AG04450 (cell line): ENCODE measurements at regions of chr20 and their contacts with region 1.

Region 1: DNA sequence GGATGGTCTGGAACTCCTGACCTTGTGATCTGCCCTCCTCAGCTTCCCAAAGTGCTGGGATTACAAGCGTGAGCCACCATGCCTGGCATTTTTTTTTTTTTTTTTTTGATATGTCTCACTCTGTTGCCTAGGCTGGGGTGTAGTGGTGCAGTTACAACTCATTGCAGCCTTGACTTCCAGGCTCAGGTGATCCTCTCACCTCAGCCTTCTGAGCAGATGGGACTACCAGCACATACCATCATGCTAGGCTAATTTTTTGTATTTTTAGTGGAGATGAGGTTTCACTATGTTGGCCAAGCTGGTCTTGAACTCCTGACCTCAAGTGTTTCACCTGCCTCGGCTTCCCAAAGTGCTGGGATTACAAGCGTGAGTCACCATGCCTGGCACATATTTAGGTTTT is 34.3 kb downstream of the PHF20 start:
- DNase-seq: no peak
- H3K4me3 ChIP-seq: no peak overlapping the region
- H3K27ac ChIP-seq: no peak overlapping the region
- H3K27me3 ChIP-seq: no peaks in the 10 kb centered on the region
- CTCF ChIP-seq: no peak

Region 2: DNA sequence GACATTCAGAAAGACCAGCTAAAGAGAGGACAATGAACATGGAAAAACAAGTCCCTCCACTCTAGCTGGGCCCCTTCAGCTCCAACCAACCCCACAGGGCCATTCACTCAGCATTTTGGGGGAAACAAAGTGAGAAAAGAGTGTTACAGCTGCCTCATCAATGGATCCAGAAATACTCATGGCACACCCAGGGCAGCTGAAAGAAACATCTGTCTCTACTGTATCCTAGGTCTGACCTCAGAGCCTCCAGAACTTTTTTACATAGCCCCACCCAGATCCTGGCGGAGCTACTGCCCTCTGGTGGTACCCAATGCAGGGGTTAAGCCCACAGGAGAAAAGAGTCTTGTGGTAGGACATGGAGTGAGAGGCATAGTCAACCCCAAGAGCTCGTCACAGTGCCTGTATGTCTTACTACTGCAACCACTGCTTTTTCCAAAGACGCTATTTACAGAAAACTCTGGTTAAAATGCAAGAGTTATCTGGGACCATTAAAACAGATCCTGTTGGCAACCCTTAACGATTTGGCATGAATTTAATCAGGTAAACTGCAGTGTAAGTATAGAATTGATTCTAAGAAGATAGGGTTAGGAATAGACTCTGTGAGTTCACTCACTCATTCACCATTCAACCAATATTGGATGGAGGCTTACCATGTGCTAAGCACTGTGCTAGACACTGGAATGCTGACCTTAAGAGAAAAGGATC is 476.5 kb before region 1 on chr20:
- CTCF ChIA-PET with region 1: no interaction called
- POLR2A ChIA-PET with region 1: no interaction called
- DNase-seq: no peak
- H3K4me3 ChIP-seq: no peak overlapping the region
- H3K27ac ChIP-seq: no peak overlapping the region
- H3K27me3 ChIP-seq: no peaks in the 10 kb centered on the region
- CTCF ChIP-seq: peak; percentile 51

Region 3: GRCh38 chr20:35776513-35777101 is 29.5 kb before region 1 on chr20:
- CTCF ChIA-PET with region 1: no interaction called
- POLR2A ChIA-PET with region 1: no interaction called
- DNase-seq: no peak
- H3K4me3 ChIP-seq: no peak overlapping the region
- H3K27ac ChIP-seq: no peak overlapping the region
- H3K27me3 ChIP-seq: no peaks in the 10 kb centered on the region
- CTCF ChIP-seq: no peak

Region 4: DNA sequence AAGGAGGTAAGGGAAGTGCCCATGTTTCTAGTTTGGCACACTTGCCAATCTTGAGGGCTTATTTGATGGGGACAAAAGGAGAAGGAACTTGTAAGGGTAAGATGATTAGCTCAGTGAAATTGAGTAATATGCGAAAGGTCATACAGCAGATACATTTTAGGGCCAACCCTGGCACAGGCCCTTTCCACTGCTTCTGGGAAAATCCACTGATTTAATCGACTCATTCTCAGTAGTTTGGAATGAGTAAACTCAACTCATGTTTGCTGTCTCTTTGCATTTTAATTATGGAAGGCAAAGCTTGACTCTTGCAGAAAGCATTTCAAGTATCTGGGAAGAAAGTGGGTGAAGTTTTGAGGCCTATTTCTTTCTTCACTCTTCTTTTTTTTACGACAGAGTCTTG is 14.3 kb before region 1 on chr20:
- CTCF ChIA-PET with region 1: no interaction called
- POLR2A ChIA-PET with region 1: interaction called, 11 read pairs
- DNase-seq: peak; percentile 65
- H3K4me3 ChIP-seq: no peak overlapping the region; the same call in 1 of the 2 replicates
- H3K27ac ChIP-seq: peak overlapping the region; percentile 94
- H3K27me3 ChIP-seq: no peaks in the 10 kb centered on the region
- CTCF ChIP-seq: no peak